Astrocyte of the cerebellum (primary cell): ENCODE measurements at regions of chr11 and their contacts with region 1.

Region 1: GRCh38 chr11:43905813-43906241 is 25.2 kb downstream of the ALKBH3 start:
- DNase-seq: no peak
- H3K4me3 ChIP-seq: no peak overlapping the region
- CTCF ChIP-seq: no peak

Region 2: GRCh38 chr11:43962383-43963278 is 56.8 kb after region 1 on chr11:
- in situ Hi-C with region 1: no loop called
- DNase-seq: no peak
- H3K4me3 ChIP-seq: no peak overlapping the region
- CTCF ChIP-seq: no peak

Region 3: GRCh38 chr11:43984519-43985385 is 78.9 kb after region 1 on chr11:
- in situ Hi-C with region 1: no loop called
- DNase-seq: no peak
- H3K4me3 ChIP-seq: no peak overlapping the region
- CTCF ChIP-seq: no peak

Region 4: DNA sequence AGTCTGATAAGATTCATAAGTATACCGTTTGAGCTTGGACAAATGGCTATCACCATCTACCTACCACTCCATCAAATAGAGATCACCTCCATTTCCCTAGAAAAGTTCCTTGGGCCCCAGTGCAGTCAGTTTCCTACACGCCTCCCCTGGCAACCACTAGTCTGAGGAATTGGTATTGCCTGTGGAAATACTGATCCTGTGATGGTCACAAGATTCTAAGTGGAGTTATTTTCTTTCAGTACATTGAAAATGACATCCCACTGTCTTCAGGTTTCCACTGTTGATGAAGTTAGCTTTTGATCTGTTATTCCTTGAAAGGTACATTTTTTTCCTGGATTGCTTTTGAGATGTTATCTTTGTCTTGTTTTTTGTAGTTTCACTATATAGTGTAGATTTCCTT is 137.3 kb after region 1 on chr11:
- in situ Hi-C with region 1: loop called (anchors 5 kb)
- DNase-seq: no peak
- H3K4me3 ChIP-seq: no peak overlapping the region
- CTCF ChIP-seq: no peak